ENCODE measurements at regions of chr2 and their contacts with region 1.

Region 1: DNA sequence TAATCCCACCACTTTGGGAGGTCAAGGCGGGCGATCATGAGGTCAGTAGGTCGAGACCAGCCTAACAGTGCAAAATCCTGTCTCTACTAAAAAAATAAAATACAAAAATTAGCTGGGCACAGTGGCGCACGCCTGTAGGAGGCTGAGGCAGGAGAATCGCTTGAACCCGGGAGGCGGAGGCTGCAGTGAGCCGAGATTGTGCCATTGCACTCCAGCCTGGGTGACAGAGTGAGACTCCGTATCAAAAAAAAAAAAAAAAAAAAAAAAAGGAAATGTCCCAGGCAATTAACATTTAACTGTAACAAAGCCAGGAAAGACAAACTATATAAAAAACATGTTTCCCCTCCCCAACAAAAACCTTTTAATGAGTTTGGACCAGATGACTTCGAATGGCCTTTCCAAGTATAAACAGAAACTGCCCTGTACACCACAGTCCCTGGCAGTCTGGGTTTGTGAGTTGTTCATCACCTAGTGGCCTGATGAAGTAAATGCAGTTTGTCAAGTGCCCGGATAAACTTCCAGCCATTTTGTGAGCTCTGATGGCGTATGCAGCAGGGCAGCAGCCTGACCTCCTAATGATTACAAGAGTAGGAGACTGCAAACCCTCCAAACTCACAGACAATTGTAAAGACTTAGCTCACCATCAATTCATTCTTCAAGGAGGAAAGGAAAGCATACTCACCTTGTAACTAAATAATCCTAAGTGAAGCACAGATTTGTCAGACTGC is 16.6 kb upstream of the PCBP1 start:
- DNase-seq: peak; percentile 73
- ATAC-seq: peak; percentile 60
- H3K4me3 Mint-ChIP-seq: peak overlapping the region; percentile 48
- H3K27ac Mint-ChIP-seq: peak overlapping the region; percentile 94
- H3K4me1 Mint-ChIP-seq: peaks cover 51% of the 10 kb centered on the region
- H3K27me3 Mint-ChIP-seq: no peaks in the 10 kb centered on the region

Region 2: GRCh38 chr2:69933839-69934613 is 136.7 kb before region 1 on chr2:
- CTCF ChIA-PET with region 1: interaction called, 3 read pairs
- POLR2A ChIA-PET with region 1: interaction called, 3 read pairs
- intact Hi-C with region 1: loop called (anchors 2 to 5 kb)
- DNase-seq: peak; percentile 61
- ATAC-seq: peak; percentile 81
- H3K4me3 Mint-ChIP-seq: no peak overlapping the region
- H3K27ac Mint-ChIP-seq: peak overlapping the region; percentile 77
- H3K4me1 Mint-ChIP-seq: peaks cover 34% of the 10 kb centered on the region
- H3K27me3 Mint-ChIP-seq: no peaks in the 10 kb centered on the region